ENCODE measurements at regions of chr17 and their contacts with region 1.

Region 1: GRCh38 chr17:43878260-43879175 is 28.8 kb downstream of the MPP2 start:
- DNase-seq: peak; percentile 79
- ATAC-seq: peak; percentile 90
- H3K4me3 Mint-ChIP-seq: no peak overlapping the region
- H3K27ac Mint-ChIP-seq: no peak overlapping the region
- H3K4me1 Mint-ChIP-seq: no peaks in the 10 kb centered on the region
- H3K27me3 Mint-ChIP-seq: no peaks in the 10 kb centered on the region

Region 2: GRCh38 chr17:43868226-43868994 is 10.1 kb before region 1 on chr17:
- CTCF ChIA-PET with region 1: interaction called, 15 read pairs
- POLR2A ChIA-PET with region 1: no interaction called
- intact Hi-C with region 1: no loop called
- DNase-seq: no peak
- ATAC-seq: no peak
- H3K4me3 Mint-ChIP-seq: no peak overlapping the region
- H3K27ac Mint-ChIP-seq: no peak overlapping the region
- H3K4me1 Mint-ChIP-seq: no peaks in the 10 kb centered on the region
- H3K27me3 Mint-ChIP-seq: peaks cover 16% of the 10 kb centered on the region

Region 3: GRCh38 chr17:43888548-43888947 is 10.0 kb after region 1 on chr17:
- CTCF ChIA-PET with region 1: interaction called, 15 read pairs
- POLR2A ChIA-PET with region 1: no interaction called
- intact Hi-C with region 1: no loop called
- DNase-seq: no peak
- ATAC-seq: no peak
- H3K4me3 Mint-ChIP-seq: no peak overlapping the region
- H3K27ac Mint-ChIP-seq: no peak overlapping the region
- H3K4me1 Mint-ChIP-seq: no peaks in the 10 kb centered on the region
- H3K27me3 Mint-ChIP-seq: peaks cover 5% of the 10 kb centered on the region

Region 4: DNA sequence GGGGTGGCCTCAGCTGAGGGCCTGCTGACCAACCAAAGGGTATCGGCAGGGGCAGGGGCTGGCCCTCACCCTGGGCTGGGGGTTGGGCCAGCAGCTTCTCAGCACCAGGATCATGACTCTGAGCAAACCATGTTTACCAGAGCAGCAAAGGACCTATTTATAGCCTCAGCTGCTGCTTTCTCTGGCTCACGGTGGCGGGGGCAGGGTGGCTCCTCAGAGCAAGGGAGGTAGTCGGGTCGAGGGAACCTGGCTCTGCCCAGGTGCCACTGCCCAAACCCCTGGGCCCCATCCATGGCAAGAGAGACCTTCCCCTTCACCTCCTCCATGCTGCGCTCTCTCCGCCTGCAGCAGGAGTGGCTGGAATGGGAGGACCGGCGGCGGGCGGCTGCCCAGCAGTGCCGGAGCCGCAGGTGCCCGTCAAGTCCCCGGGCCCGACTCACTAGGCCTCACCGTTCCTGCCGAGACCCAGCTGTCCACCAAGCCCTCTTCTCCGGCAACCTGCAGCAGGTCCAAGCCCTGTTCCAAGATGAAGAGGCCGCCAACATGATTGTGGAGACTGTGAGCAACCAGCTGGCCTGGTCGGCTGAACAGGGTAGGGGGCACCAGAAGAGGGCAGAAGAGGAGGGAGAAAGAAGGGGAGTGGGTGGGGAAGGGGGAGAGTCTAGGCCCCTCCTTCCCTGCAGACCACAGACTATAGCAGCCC is 292.1 kb after region 1 on chr17 and contains the start of gene ASB16:
- CTCF ChIA-PET with region 1: no interaction called
- POLR2A ChIA-PET with region 1: no interaction called
- intact Hi-C with region 1: no loop called
- DNase-seq: no peak
- ATAC-seq: no peak
- H3K4me3 Mint-ChIP-seq: no peak within 1 kb of the TSS
- H3K27ac Mint-ChIP-seq: no peak within 1 kb of the TSS
- H3K4me1 Mint-ChIP-seq: peaks cover 8% of the 10 kb centered on the region
- H3K27me3 Mint-ChIP-seq: no peaks in the 10 kb centered on the region
- total RNA-seq, gene ASB16: 0.14 TPM

Region 5: GRCh38 chr17:44518032-44518431 is 639.5 kb after region 1 on chr17:
- CTCF ChIA-PET with region 1: no interaction called
- POLR2A ChIA-PET with region 1: no interaction called
- intact Hi-C with region 1: no loop called
- DNase-seq: no peak
- ATAC-seq: no peak
- H3K4me3 Mint-ChIP-seq: no peak overlapping the region
- H3K27ac Mint-ChIP-seq: no peak overlapping the region
- H3K4me1 Mint-ChIP-seq: no peaks in the 10 kb centered on the region
- H3K27me3 Mint-ChIP-seq: peaks cover 14% of the 10 kb centered on the region

Measured in activated CD4-positive, alpha-beta T cell treated with anti-CD3 and anti-CD28 coated beads for 36 hours (primary cell).